Activated T-helper 1 cell treated with anti-CD3 and anti-CD28 coated beads, Interleukin-12 subunit alpha, Interleukin-12 subunit beta, Interleukin-2, Interleukin-4 antibody, amounts not matched to agents 30 ng/mL and 10 ng/mL and 1 ng/mL, durations not matched to agents 14 hours and 24 hours and 36 hours (primary cell): ENCODE measurements at regions of chr1 and their contacts with region 1.

Region 1: GRCh38 chr1:185044981-185045813 is at the start of gene RNF2:
- DNase-seq: peak; percentile 65
- H3K4me3 Mint-ChIP-seq: peak within 1 kb of the TSS; percentile 89
- H3K27ac Mint-ChIP-seq: peak within 1 kb of the TSS; percentile 82
- H3K4me1 Mint-ChIP-seq: peaks cover 29% of the 10 kb centered on the region
- H3K27me3 Mint-ChIP-seq: peaks cover 15% of the 10 kb centered on the region
- total RNA-seq, gene RNF2: 24.1 and 24.4 TPM in 2 replicates

Region 2: DNA sequence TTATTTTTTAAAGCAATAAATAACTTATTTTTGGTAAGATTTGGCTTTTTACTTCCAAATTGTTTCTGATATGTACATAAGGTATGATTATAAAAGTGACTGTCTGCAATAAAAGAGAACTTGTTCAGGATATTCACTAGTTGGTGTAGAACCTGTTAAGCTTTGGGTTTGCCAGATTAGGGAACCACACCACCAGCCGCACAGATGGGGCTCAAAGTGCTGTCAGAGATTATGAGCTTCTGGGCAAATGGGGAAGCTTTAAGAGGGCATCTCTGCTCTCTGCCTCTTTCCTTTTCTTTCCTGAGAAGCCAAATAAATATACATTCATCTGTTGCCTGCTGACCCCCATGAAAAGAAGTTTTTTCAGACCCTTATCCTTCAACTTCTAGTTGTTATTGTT is 246.5 kb after region 1 on chr1:
- intact Hi-C with region 1: loop called (anchors 5 kb)
- DNase-seq: no peak
- H3K4me3 Mint-ChIP-seq: no peak overlapping the region
- H3K27ac Mint-ChIP-seq: no peak overlapping the region
- H3K4me1 Mint-ChIP-seq: peaks cover 21% of the 10 kb centered on the region
- H3K27me3 Mint-ChIP-seq: no peaks in the 10 kb centered on the region

Region 3: GRCh38 chr1:185681034-185681633 is 635.9 kb after region 1 on chr1:
- intact Hi-C with region 1: loop called (anchors 5 kb)
- DNase-seq: peak; percentile 20
- H3K4me3 Mint-ChIP-seq: no peak overlapping the region
- H3K27ac Mint-ChIP-seq: no peak overlapping the region
- H3K4me1 Mint-ChIP-seq: peaks cover 21% of the 10 kb centered on the region
- H3K27me3 Mint-ChIP-seq: peaks cover 14% of the 10 kb centered on the region